GM12878 (cell line): ENCODE measurements at regions of chr5 and their contacts with region 1.

Region 1: GRCh38 chr5:39547553-39548154 is 122.9 kb upstream of the DAB2 start:
- DNase-seq: no peak
- ATAC-seq: peak; percentile 36; the same call in 1 of the 3 replicates
- H3K4me3 ChIP-seq: no peak overlapping the region
- H3K27ac ChIP-seq: no peak overlapping the region
- H3K4me1 ChIP-seq: no peaks in the 10 kb centered on the region
- H3K27me3 ChIP-seq: peaks cover 0 to 4% of the 10 kb centered on the region in 2 experiments; a peak in 3 of 4 replicates
- CTCF ChIP-seq: peak; percentile 50 to 62 (median 59)
- EP300 ChIP-seq: no peak
- POLR2A ChIP-seq: no peak
- RAD21 ChIP-seq: peak; percentile 44

Region 2: GRCh38 chr5:39505363-39505762 is 42.3 kb before region 1 on chr5:
- CTCF ChIA-PET with region 1: no interaction called
- POLR2A ChIA-PET with region 1: no interaction called
- RAD21 ChIA-PET with region 1: no interaction called
- SMC1A ChIA-PET with region 1: no interaction called
- in situ Hi-C with region 1: no loop called
- intact Hi-C with region 1: no loop called
- DNase-seq: no peak
- ATAC-seq: no peak
- H3K4me3 ChIP-seq: no peak overlapping the region
- H3K27ac ChIP-seq: no peak overlapping the region
- H3K4me1 ChIP-seq: no peaks in the 10 kb centered on the region
- H3K27me3 ChIP-seq: no peaks in the 10 kb centered on the region
- CTCF ChIP-seq: no peak
- EP300 ChIP-seq: no peak
- POLR2A ChIP-seq: no peak
- RAD21 ChIP-seq: no peak

Region 3: DNA sequence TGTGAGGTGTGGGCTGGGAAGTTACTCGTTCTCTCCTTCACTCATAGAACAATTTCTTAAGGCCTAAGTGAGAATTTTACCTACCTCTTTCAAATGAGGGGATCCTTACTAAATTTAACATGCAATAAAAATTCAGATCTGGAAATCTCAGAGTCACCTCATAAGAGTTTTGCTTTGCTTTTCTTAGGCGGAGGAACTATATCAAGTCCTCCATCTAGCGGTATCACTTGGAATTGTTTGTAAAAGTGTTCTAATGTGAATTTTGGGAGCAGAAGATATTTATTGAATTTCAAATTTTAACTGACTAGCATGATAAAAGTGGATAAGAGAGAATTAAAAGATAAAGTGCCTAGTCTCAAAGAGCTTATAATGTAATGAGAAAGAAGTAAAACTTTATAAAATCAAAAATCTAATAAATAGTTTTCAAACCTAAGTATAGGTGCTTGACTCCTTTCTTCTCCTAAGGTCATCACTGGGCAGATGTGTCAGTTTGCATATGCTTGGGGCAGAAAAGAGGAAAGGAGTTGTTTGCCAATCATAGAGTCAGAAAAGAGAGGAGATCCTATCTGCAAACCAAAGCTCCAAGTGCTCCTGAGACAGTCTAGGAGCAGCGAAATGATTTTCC is 22.9 kb after region 1 on chr5:
- CTCF ChIA-PET with region 1: interaction called, 10 read pairs
- POLR2A ChIA-PET with region 1: no interaction called
- RAD21 ChIA-PET with region 1: no interaction called
- SMC1A ChIA-PET with region 1: no interaction called
- in situ Hi-C with region 1: no loop called
- intact Hi-C with region 1: no loop called
- DNase-seq: no peak
- ATAC-seq: peak; percentile 46; the same call in 1 of the 3 replicates
- H3K4me3 ChIP-seq: no peak overlapping the region
- H3K27ac ChIP-seq: no peak overlapping the region
- H3K4me1 ChIP-seq: no peaks in the 10 kb centered on the region
- H3K27me3 ChIP-seq: no peaks in the 10 kb centered on the region
- CTCF ChIP-seq: peak; percentile 32 to 47 (median 45); a peak in 5 of 6 replicates
- EP300 ChIP-seq: no peak
- POLR2A ChIP-seq: no peak
- RAD21 ChIP-seq: peak; percentile 46

Region 4: GRCh38 chr5:39775458-39776365 is 228.1 kb after region 1 on chr5:
- CTCF ChIA-PET with region 1: no interaction called
- POLR2A ChIA-PET with region 1: no interaction called
- RAD21 ChIA-PET with region 1: no interaction called
- SMC1A ChIA-PET with region 1: no interaction called
- in situ Hi-C with region 1: no loop called
- intact Hi-C with region 1: no loop called
- DNase-seq: no peak
- ATAC-seq: no peak
- H3K4me3 ChIP-seq: no peak overlapping the region
- H3K27ac ChIP-seq: no peak overlapping the region
- H3K4me1 ChIP-seq: no peaks in the 10 kb centered on the region
- H3K27me3 ChIP-seq: no peaks in the 10 kb centered on the region
- CTCF ChIP-seq: no peak
- EP300 ChIP-seq: no peak
- POLR2A ChIP-seq: no peak
- RAD21 ChIP-seq: no peak